T-cell (primary cell): ENCODE measurements at regions of chr5 and their contacts with region 1.

Region 1: GRCh38 chr5:54844905-54845566 is 140.4 kb downstream of the ESM1 start:
- DNase-seq: peak in 1 of 35 experiments; percentile 72
- ATAC-seq: peak; percentile 44 to 60 (median 51)
- H3K4me3 ChIP-seq: no peak overlapping the region
- H3K4me3 Mint-ChIP-seq: peak overlapping the region; percentile 26 to 47 (median 40)
- H3K27ac ChIP-seq: no peak overlapping the region
- H3K27ac Mint-ChIP-seq: peak overlapping the region; percentile 9 to 66
- H3K4me1 ChIP-seq: no peaks in the 10 kb centered on the region
- H3K4me1 Mint-ChIP-seq: peaks cover 4 to 6% (median 6%) of the 10 kb centered on the region in 3 donors
- H3K27me3 ChIP-seq: peaks cover 0 to 5% of the 10 kb centered on the region in 2 experiments
- H3K27me3 Mint-ChIP-seq: peaks cover 9 to 11% of the 10 kb centered on the region in 2 donors

Region 2: DNA sequence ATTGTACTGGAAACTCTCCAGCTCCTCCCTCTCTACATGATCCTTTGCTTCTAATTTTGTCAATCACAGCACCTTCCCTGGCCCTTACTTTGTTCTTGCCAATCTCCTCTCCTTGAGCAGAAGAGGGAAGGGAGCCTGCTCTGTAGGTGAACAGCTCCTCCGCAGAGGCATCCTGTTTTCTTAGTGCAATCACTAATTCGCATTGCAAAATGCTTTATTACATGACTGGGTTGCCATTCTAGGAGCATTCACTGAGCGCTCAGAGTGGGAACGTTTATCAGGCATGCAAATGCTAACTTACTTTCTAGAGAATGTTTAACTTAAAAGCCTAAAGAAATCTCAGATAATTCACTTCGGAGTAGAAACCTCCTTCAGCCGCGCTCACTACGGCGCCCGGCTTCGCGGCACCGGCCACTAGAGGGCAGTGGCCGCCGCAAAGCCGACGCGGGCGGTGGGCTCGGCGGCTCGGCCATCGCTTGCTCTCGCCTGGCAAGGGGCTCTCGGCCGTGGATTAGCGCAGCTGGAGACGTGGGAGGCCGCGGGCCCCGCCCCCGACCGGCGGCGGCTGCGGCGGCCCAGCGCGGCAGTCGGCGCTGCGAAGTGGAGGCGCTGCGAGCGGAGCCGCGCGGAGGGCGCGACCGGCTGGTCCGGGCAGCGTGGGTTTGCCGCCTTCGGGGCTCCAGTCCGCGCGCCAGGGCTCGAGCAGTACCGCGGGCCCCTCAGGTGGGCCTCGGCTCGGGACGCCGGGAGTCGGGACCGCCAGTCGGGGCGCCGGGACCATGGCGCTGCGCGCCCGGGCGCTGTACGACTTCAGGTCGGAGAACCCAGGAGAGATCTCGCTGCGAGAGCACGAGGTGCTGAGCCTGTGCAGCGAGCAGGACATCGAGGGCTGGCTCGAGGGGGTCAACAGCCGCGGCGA is 327.6 kb before region 1 on chr5 and contains the start of gene SNX18:
- CTCF ChIA-PET with region 1: interaction called, 32 to 91 read pairs
- POLR2A ChIA-PET with region 1: no interaction called
- DNase-seq: peak; percentile 80 to 96 (median 91)
- ATAC-seq: peak; percentile 92 to 93 (median 92)
- H3K4me3 ChIP-seq: peak within 1 kb of the TSS; percentile 64 to 84
- H3K4me3 Mint-ChIP-seq: peak within 1 kb of the TSS; percentile 79 to 85 (median 81)
- H3K27ac ChIP-seq: no peak within 1 kb of the TSS
- H3K27ac Mint-ChIP-seq: peak within 1 kb of the TSS; percentile 21 to 22
- H3K4me1 ChIP-seq: peaks cover 29 to 31% of the 10 kb centered on the region in 2 experiments
- H3K4me1 Mint-ChIP-seq: peaks cover 30 to 49% (median 40%) of the 10 kb centered on the region in 3 donors
- H3K27me3 ChIP-seq: no peaks in the 10 kb centered on the region
- H3K27me3 Mint-ChIP-seq: no peaks in the 10 kb centered on the region
- total RNA-seq, gene SNX18: 13.7 to 35.7 (median 31.1) TPM

Region 3: DNA sequence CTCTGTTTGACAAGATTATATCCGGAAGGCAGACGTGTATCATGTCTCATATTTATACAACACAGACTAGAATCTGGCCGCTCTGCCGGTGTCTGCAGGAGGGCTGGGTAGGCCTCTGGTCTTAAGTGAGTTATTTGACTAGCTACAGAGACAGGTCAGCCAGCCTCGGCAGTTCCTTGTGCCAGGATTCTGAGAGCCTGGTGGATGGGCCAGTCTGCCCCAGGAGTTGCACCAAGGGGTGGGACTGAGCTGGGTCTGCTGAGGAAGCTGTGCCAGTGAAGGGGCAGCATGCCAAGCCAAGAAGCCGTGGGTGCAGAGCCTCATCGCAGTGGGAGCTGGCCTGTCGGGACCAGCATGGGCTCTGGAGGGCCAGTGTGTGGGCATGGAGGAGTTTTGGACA is 320.3 kb before region 1 on chr5:
- CTCF ChIA-PET with region 1: interaction called, 6 to 91 read pairs
- POLR2A ChIA-PET with region 1: interaction called in 1 of 2 experiments, 4 read pairs
- DNase-seq: no peak
- ATAC-seq: no peak
- H3K4me3 ChIP-seq: no peak overlapping the region
- H3K4me3 Mint-ChIP-seq: peak overlapping the region in 2 of 3 donors; percentile 2 to 51
- H3K27ac ChIP-seq: no peak overlapping the region
- H3K27ac Mint-ChIP-seq: no peak overlapping the region
- H3K4me1 ChIP-seq: peaks cover 30 to 52% of the 10 kb centered on the region in 2 experiments
- H3K4me1 Mint-ChIP-seq: peaks cover 15 to 60% (median 54%) of the 10 kb centered on the region in 3 donors
- H3K27me3 ChIP-seq: no peaks in the 10 kb centered on the region
- H3K27me3 Mint-ChIP-seq: no peaks in the 10 kb centered on the region

Region 4: GRCh38 chr5:54867310-54867944 is 22.4 kb after region 1 on chr5:
- CTCF ChIA-PET with region 1: interaction called in 1 of 2 experiments, 23 read pairs
- POLR2A ChIA-PET with region 1: interaction called in 1 of 2 experiments, 3 read pairs
- DNase-seq: peak in 4 of 35 experiments; percentile 8 to 69 (median 10)
- ATAC-seq: peak; percentile 51 to 69 (median 66)
- H3K4me3 ChIP-seq: peak overlapping the region in 1 of 2 donors; percentile 10
- H3K4me3 Mint-ChIP-seq: peak overlapping the region; percentile 13 to 35 (median 31)
- H3K27ac ChIP-seq: no peak overlapping the region
- H3K27ac Mint-ChIP-seq: no peak overlapping the region
- H3K4me1 ChIP-seq: peaks cover 0 to 2% of the 10 kb centered on the region in 2 experiments
- H3K4me1 Mint-ChIP-seq: peaks cover 8 to 9% (median 8%) of the 10 kb centered on the region in 3 donors
- H3K27me3 ChIP-seq: no peaks in the 10 kb centered on the region
- H3K27me3 Mint-ChIP-seq: peaks cover 9 to 26% of the 10 kb centered on the region in 2 donors